ENCODE measurements at regions of chr3 and their contacts with region 1.

Region 1: GRCh38 chr3:15557511-15557946 is 36.0 kb upstream of the COLQ start:
- DNase-seq: peak; percentile 93
- H3K4me3 Mint-ChIP-seq: no peak overlapping the region
- H3K27ac Mint-ChIP-seq: no peak overlapping the region
- H3K4me1 Mint-ChIP-seq: peaks cover 28% of the 10 kb centered on the region
- H3K27me3 Mint-ChIP-seq: no peaks in the 10 kb centered on the region

Region 2: DNA sequence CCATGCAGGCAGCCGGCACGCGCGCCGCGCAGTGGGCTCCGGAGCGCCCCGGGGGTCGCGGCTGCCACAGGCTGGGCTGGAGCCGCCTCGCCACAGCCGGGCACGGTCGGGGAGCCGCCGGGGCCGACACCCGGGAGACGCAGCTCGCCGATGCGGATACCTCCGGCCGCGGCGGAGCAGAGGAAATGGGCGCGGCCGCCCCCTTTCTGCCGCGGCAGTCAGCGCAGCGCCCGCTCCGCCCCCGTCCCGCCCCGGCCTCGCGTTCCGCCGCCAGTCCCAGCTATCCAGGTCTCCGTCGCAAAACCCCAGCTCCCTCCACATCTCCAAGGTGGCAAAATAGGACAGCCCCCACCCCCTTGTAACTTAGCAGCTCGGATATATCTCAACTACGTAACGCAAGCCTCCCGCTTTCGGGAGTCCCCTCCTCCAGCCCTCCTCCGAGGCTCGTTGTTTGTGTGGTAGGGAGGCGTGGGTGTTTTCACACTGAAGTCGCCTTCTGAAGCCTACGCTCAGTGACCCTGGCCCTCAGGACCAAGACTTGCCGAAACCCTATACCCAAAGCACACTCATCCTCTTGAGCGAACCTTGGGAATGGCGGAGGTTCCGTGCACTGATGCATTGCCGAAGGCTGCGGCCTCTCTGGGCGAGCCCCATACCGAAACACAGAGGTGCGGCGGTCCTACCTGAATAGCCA is 225.0 kb before region 1 on chr3 and contains the start of gene SH3BP5:
- intact Hi-C with region 1: loop called (anchors 1 kb)
- DNase-seq: peak; percentile 94
- H3K4me3 Mint-ChIP-seq: peak within 1 kb of the TSS; percentile 92
- H3K27ac Mint-ChIP-seq: peak within 1 kb of the TSS; percentile 89
- H3K4me1 Mint-ChIP-seq: peaks cover 48% of the 10 kb centered on the region
- H3K27me3 Mint-ChIP-seq: peaks cover 2% of the 10 kb centered on the region
- total RNA-seq, gene SH3BP5: 19.5 and 19.8 TPM in 2 replicates

Region 3: GRCh38 chr3:15377961-15378791 is 179.4 kb before region 1 on chr3:
- intact Hi-C with region 1: loop called (anchors 1 kb)
- DNase-seq: peak; percentile 99
- H3K4me3 Mint-ChIP-seq: no peak overlapping the region
- H3K27ac Mint-ChIP-seq: peak overlapping the region; percentile 86
- H3K4me1 Mint-ChIP-seq: peaks cover 14% of the 10 kb centered on the region
- H3K27me3 Mint-ChIP-seq: peaks cover 3% of the 10 kb centered on the region

Region 4: GRCh38 chr3:15427182-15427880 is 130.2 kb before region 1 on chr3 and contains the starts of genes EAF1 and METTL6:
- intact Hi-C with region 1: loop called (anchors 1 kb)
- DNase-seq: peak; percentile 96
- H3K4me3 Mint-ChIP-seq: peak within 1 kb of the TSS; percentile 96
- H3K27ac Mint-ChIP-seq: peak within 1 kb of the TSS; percentile 95
- H3K4me1 Mint-ChIP-seq: peaks cover 47% of the 10 kb centered on the region
- H3K27me3 Mint-ChIP-seq: no peaks in the 10 kb centered on the region
- total RNA-seq, gene EAF1: 24.2 and 25.7 TPM in 2 replicates
- total RNA-seq, gene METTL6: 15.2 and 17.4 TPM in 2 replicates

Region 5: GRCh38 chr3:15500107-15500724 is 57.3 kb before region 1 on chr3:
- intact Hi-C with region 1: loop called (anchors 1 kb)
- DNase-seq: no peak
- H3K4me3 Mint-ChIP-seq: peak overlapping the region; percentile 3
- H3K27ac Mint-ChIP-seq: peak overlapping the region; percentile 17
- H3K4me1 Mint-ChIP-seq: peaks cover 40% of the 10 kb centered on the region
- H3K27me3 Mint-ChIP-seq: no peaks in the 10 kb centered on the region

Region 6: DNA sequence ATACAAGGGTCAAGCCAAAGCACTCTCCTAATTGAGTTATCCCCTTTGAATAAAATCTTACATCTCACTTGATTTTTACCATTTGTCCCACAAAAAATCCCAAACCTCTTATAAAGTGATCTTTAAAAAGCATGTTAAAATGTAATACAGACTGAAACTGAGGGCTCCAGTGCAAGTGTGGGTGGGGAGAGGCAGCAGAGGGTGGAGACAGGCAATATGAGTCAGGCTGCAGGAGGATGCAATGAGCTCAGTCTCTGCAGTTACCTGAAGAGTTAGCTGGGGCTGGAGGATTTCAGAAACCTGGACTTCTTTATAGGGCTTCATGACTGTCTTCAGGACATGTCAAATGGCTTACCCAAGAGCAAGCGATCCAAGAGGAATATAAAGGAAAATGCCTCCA is 21.8 kb before region 1 on chr3:
- intact Hi-C with region 1: loop called (anchors 2 kb)
- DNase-seq: peak; percentile 86
- H3K4me3 Mint-ChIP-seq: peak overlapping the region; percentile 76
- H3K27ac Mint-ChIP-seq: peak overlapping the region; percentile 91
- H3K4me1 Mint-ChIP-seq: peaks cover 54% of the 10 kb centered on the region
- H3K27me3 Mint-ChIP-seq: no peaks in the 10 kb centered on the region

Measured in activated CD4-positive, alpha-beta T cell treated with anti-CD3 and anti-CD28 coated beads, Interleukin-2, amount 10 ng/mL, durations not matched to agents 24 days and 14 days (primary cell).